ENCODE measurements at regions of chr5 and their contacts with region 1.

Region 1: DNA sequence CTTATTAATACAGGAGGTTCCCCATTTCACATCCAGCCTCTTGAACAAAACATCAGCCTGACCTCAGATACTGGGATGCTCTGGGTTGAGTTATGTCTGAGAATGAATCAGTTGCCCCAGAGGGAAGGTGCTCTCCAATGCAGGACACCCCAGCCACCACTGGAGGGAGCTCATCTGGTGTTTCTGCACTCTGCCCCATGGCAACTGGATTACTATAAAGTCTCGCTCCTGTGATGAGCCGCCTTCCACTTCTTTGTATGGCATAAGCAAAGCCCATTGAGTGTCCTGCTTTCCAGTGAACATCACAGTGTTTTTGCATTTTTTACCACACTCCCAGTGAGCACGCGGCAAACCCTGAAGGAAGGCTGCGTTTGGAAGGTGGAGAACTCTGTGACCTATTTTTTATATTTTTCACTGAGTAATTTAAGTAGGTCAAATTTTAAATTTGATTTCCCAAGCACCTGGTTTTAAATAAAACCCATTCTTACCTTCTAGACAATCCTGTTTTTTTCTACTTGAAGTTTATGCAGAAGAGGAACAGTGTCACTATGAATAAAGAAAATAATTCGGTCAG is 176.9 kb upstream of the WWC1 start:
- DNase-seq: peak; percentile 43 to 92
- H3K4me3 ChIP-seq: no peak overlapping the region
- H3K27ac ChIP-seq: no peak overlapping the region
- H3K4me1 ChIP-seq: peaks cover 3 to 9% (median 3%) of the 10 kb centered on the region in 4 experiments; a peak in 6 of 7 replicates
- H3K27me3 ChIP-seq: no peaks in the 10 kb centered on the region
- CTCF ChIP-seq: peak; percentile 88 to 98 (median 98)
- EP300 ChIP-seq: no peak
- POLR2A ChIP-seq: no peak
- RAD21 ChIP-seq: peak; percentile 87 to 90

Region 2: DNA sequence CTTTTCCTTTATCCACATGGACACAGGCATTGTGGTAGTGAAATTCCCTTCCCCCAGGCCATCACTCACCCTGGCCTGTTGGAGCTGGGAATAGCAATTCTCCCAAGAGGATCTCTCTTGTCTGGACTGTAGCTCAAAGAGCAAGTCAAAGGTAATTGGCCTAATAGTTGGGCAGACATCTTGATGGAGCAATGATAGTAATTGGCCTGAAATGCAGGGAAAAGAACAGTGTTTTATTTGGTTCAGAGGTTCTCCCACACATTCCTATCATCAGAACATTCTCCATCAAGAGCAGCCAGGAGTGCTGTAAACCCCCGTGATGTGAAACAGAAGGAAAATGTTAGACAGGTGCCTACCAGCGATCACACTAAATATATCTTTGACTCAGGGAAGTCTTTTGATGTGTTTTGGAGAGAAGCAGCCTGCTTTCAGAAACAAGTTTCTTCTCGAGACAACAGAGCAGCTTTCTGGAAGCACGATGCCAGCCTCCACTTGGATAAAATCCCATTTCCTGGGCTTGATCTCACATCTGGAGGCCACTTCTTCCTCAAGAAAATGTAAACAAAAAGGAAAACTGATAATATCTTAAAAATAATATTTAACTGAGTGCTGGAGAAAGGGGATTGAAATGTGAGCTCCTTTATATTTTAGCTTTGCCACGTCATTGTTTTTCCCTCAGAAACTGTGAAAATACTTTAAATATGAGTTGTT is 21.2 kb before region 1 on chr5:
- CTCF ChIA-PET with region 1: interaction called, 10 read pairs
- POLR2A ChIA-PET with region 1: no interaction called
- DNase-seq: no peak
- H3K4me3 ChIP-seq: no peak overlapping the region
- H3K27ac ChIP-seq: no peak overlapping the region
- H3K4me1 ChIP-seq: no peaks in the 10 kb centered on the region
- H3K27me3 ChIP-seq: peaks cover 0 to 1% (median 0%) of the 10 kb centered on the region in 4 experiments; a peak in 1 of 7 replicates
- CTCF ChIP-seq: no peak
- EP300 ChIP-seq: no peak
- POLR2A ChIP-seq: no peak
- RAD21 ChIP-seq: no peak

Region 3: DNA sequence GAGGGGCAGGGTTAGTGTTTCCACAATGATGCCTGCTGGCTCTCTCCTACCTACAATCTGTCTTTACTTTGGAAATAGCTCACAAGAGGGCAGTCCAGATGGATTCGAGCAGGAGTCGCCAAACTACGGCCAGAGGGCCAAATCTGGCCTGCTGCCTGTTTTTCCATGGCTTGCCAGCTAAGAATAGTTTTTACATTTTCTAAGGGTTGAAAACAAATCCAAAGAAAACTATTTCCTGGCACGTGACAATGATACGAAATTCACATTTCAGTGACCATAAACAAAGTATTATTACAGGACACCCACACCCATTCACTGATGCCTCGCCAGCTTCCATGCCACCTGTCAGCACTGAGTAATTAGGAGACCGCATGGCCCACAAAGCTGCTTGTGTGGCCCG is 14.0 kb after region 1 on chr5:
- CTCF ChIA-PET with region 1: interaction called, 13 read pairs
- POLR2A ChIA-PET with region 1: no interaction called
- DNase-seq: no peak
- H3K4me3 ChIP-seq: no peak overlapping the region
- H3K27ac ChIP-seq: no peak overlapping the region
- H3K4me1 ChIP-seq: peaks cover 0 to 6% (median 2%) of the 10 kb centered on the region in 4 experiments; a peak in 1 of 7 replicates
- H3K27me3 ChIP-seq: no peaks in the 10 kb centered on the region
- CTCF ChIP-seq: no peak
- EP300 ChIP-seq: no peak
- POLR2A ChIP-seq: no peak
- RAD21 ChIP-seq: no peak

Region 4: GRCh38 chr5:168168978-168169696 is 54.6 kb after region 1 on chr5:
- CTCF ChIA-PET with region 1: interaction called, 12 read pairs
- POLR2A ChIA-PET with region 1: no interaction called
- DNase-seq: no peak
- H3K4me3 ChIP-seq: no peak overlapping the region
- H3K27ac ChIP-seq: no peak overlapping the region
- H3K4me1 ChIP-seq: peaks cover 5 to 10% (median 7%) of the 10 kb centered on the region in 4 experiments; a peak in 5 of 7 replicates
- H3K27me3 ChIP-seq: no peaks in the 10 kb centered on the region
- CTCF ChIP-seq: no peak
- EP300 ChIP-seq: no peak
- POLR2A ChIP-seq: no peak
- RAD21 ChIP-seq: no peak

Region 5: DNA sequence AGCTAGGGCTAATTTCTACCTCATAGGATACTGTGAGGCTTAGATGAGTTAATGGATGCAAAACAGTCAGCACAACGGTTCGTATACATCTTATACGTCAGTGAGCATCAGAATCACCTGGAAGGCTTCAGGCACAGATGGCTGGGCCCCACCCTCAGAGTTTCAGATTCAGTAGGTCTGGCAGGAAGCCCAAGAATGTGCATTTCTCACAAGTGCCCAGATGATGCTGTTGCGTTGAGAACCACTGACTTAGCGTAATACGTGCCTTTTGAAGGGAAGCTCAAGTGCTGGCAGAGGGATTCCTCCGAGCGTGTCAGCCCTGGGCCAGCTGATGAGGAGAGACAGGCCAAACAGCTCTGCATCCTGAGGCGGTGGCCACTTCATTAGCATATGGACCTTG is 59.8 kb after region 1 on chr5:
- CTCF ChIA-PET with region 1: interaction called, 12 read pairs
- POLR2A ChIA-PET with region 1: no interaction called
- DNase-seq: no peak
- H3K4me3 ChIP-seq: no peak overlapping the region
- H3K27ac ChIP-seq: no peak overlapping the region
- H3K4me1 ChIP-seq: peaks cover 0 to 3% (median 0%) of the 10 kb centered on the region in 4 experiments; a peak in 3 of 7 replicates
- H3K27me3 ChIP-seq: no peaks in the 10 kb centered on the region
- CTCF ChIP-seq: no peak
- EP300 ChIP-seq: no peak
- POLR2A ChIP-seq: no peak
- RAD21 ChIP-seq: no peak